Mammary epithelial cell (primary cell): ENCODE measurements at regions of chrX and their contacts with region 1.

Region 1: DNA sequence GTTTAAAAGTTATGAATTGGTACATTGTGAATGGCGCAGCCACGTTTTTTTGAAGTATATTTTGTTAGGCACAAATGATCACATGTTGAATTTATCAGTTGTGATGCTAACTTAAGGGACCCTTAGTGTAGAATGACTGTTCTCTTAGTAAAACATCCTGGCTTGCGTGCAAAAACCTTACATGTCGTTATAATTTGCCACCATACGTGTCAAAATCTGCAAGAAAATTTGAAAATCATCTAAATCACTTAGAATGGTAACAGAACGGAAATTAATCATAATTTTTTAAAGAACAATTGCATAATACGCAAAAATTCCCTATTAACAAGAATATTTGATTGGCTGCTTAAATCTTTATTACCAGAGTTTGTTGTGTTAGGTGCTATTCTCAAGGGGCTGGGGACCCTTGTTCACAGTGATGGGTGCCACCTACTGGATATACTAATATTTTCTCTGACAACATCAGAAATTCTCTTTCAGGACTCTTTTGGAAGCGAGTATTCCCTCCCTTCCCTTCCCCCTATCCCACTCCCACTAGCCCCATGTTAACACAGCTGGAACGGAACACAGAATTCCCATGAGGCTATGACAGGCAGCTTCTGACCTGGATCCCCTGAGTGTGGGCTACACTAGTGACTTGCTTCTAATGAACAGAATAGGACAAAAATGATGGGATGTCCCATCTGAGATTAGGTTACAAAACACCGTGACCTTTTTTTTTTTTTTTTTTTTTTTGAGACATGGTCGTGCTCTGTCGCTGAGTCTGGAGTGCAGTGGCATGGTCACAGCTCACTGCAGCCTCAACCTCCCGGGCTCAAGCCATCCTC is 71.8 kb downstream of the SUPT20HL2 start:
- DNase-seq: no peak
- H3K4me3 ChIP-seq: no peak overlapping the region
- H3K27ac ChIP-seq: no peak overlapping the region
- H3K4me1 ChIP-seq: peaks cover 14% of the 10 kb centered on the region
- H3K27me3 ChIP-seq: no peaks in the 10 kb centered on the region
- CTCF ChIP-seq: peak; percentile 31 to 45

Region 2: DNA sequence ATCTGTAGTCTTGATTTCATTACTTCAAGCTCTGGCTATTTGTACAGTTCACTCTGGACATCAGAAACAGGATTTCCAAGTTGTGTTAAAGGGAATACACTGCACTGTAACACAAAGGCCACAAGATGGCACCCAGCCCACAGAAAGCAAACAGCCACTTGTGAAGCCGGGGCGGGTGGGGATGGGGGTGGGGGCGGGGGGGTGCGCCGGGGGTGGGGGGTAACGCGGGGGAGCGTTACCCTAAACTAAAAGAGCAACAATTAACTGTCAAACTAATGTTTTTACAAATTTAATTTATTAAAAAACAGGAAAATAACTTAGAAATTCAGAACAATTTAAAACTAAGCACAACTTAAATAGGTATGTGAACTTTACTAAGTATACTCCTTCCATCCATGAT is 547.4 kb before region 1 on chrX:
- CTCF ChIA-PET with region 1: no interaction called
- dilution Hi-C with region 1: no loop called
- in situ Hi-C with region 1: no loop called
- intact Hi-C with region 1: loop called (anchors 10 kb)
- DNase-seq: peak; percentile 30
- H3K4me3 ChIP-seq: no peak overlapping the region
- H3K27ac ChIP-seq: no peak overlapping the region
- H3K4me1 ChIP-seq: no peaks in the 10 kb centered on the region
- H3K27me3 ChIP-seq: no peaks in the 10 kb centered on the region
- CTCF ChIP-seq: peak; percentile 53 to 61

Region 3: GRCh38 chrX:24081661-24082264 is 160.3 kb before region 1 on chrX:
- CTCF ChIA-PET with region 1: no interaction called
- dilution Hi-C with region 1: no loop called
- in situ Hi-C with region 1: loop called in 1 of 2 experiments (anchors 10 kb)
- intact Hi-C with region 1: loop called (anchors 1 kb)
- DNase-seq: peak; percentile 59
- H3K4me3 ChIP-seq: no peak overlapping the region
- H3K27ac ChIP-seq: no peak overlapping the region
- H3K4me1 ChIP-seq: no peaks in the 10 kb centered on the region
- H3K27me3 ChIP-seq: no peaks in the 10 kb centered on the region
- CTCF ChIP-seq: peak; percentile 26 to 54

Region 4: GRCh38 chrX:24150051-24150790 is 91.8 kb before region 1 on chrX:
- CTCF ChIA-PET with region 1: no interaction called
- dilution Hi-C with region 1: no loop called
- in situ Hi-C with region 1: no loop called
- intact Hi-C with region 1: loop called (anchors 5 kb)
- DNase-seq: peak; percentile 86
- H3K4me3 ChIP-seq: peak overlapping the region; percentile 86 to 98 (median 97)
- H3K27ac ChIP-seq: peak overlapping the region; percentile 82
- H3K4me1 ChIP-seq: peaks cover 49% of the 10 kb centered on the region
- H3K27me3 ChIP-seq: no peaks in the 10 kb centered on the region
- CTCF ChIP-seq: peak; percentile 8 to 39

Region 5: GRCh38 chrX:24204331-24204730 is 37.7 kb before region 1 on chrX:
- CTCF ChIA-PET with region 1: no interaction called
- dilution Hi-C with region 1: no loop called
- in situ Hi-C with region 1: no loop called
- intact Hi-C with region 1: no loop called
- DNase-seq: peak; percentile 15
- H3K4me3 ChIP-seq: no peak overlapping the region
- H3K27ac ChIP-seq: no peak overlapping the region
- H3K4me1 ChIP-seq: no peaks in the 10 kb centered on the region
- H3K27me3 ChIP-seq: no peaks in the 10 kb centered on the region
- CTCF ChIP-seq: no peak